ENCODE measurements at regions of chr4 and their contacts with region 1.

Region 1: GRCh38 chr4:47270201-47270888 is 193.2 kb downstream of the COMMD8 start:
- DNase-seq: no peak
- H3K4me3 ChIP-seq: no peak overlapping the region
- CTCF ChIP-seq: no peak

Region 2: DNA sequence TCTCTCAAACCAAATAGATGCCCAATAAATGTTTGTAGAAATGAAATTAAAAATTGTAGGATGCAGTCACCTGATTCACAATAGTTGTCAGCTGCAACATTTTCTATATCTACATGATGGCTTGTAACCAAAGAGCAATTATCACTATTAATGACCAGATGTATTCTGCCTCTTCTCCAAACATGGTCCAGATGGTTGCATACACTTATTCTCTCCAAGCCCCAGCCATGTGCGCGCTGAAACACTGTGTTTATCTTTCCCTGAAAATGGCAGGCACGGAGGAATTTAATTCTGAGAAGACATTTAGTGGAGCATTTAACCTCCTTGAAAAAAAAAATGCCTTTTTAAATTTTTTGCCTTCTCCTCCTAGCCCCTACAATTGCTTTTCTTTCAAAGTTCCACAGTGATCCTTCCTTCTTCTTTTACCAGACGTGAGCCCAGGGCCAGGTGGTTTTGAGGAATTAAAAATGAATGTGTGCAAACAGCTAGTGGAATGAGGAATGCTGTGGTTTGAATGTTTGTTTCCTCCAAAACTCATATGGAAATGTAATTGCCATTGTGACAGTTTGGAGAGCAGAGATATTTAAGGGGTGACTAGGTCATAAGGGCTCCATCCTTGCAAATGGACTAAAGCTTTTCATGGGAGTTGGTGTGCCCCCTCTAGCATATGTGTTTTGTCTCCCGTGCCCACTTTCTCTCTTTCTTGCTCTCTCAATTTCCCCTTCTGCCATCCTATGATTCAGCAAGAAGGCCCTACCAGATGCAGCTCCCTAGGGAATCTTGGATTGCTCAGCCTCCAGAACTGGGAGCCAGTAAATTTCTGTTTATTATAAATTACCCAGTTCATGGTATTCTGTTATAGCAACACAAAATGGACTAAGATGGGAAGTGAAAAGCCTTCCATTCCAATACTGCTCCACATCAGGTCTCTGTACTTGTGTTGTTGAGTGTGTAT is 103.0 kb before region 1 on chr4:
- in situ Hi-C with region 1: loop called (anchors 5 kb)
- DNase-seq: peak; percentile 6
- H3K4me3 ChIP-seq: no peak overlapping the region
- CTCF ChIP-seq: no peak

Region 3: GRCh38 chr4:47315346-47315745 is 45.0 kb after region 1 on chr4:
- in situ Hi-C with region 1: no loop called
- DNase-seq: peak; percentile 34
- H3K4me3 ChIP-seq: no peak overlapping the region
- CTCF ChIP-seq: no peak

Region 4: DNA sequence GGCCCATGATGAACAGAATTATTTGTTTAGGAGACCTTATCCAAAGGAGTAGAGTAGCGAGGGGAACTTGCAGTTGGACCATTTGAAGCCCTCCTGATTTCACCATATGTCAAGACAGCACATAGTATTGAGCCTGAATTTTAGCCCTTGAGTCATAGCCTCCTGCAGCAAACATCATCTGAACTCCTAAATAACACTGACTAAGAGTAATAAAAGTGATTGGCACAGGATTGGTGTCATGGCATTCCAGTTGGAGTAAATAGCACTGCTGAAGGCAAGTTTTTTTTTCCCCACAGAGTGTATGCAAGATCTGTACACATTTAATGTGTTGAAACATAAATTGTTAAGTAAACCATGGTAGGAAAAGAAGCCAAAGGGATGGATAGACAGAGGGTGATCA is 104.1 kb after region 1 on chr4:
- in situ Hi-C with region 1: no loop called
- DNase-seq: no peak
- H3K4me3 ChIP-seq: no peak overlapping the region
- CTCF ChIP-seq: no peak

Measured in astrocyte of the cerebellum (primary cell).